ENCODE measurements at regions of chr20 and their contacts with region 1.

Region 1: GRCh38 chr20:62900052-62900691 is 26.1 kb downstream of the DIDO1 start:
- DNase-seq: no peak
- ATAC-seq: peak; percentile 97
- H3K4me3 ChIP-seq: no peak overlapping the region
- H3K27ac ChIP-seq: peak overlapping the region; percentile 30
- H3K4me1 ChIP-seq: peaks cover 25% of the 10 kb centered on the region
- H3K27me3 ChIP-seq: no peaks in the 10 kb centered on the region
- CTCF ChIP-seq: peak; percentile 94 to 98 (median 96)
- EP300 ChIP-seq: no peak
- POLR2A ChIP-seq: peak; percentile 74
- RAD21 ChIP-seq: peak; percentile 74

Region 2: DNA sequence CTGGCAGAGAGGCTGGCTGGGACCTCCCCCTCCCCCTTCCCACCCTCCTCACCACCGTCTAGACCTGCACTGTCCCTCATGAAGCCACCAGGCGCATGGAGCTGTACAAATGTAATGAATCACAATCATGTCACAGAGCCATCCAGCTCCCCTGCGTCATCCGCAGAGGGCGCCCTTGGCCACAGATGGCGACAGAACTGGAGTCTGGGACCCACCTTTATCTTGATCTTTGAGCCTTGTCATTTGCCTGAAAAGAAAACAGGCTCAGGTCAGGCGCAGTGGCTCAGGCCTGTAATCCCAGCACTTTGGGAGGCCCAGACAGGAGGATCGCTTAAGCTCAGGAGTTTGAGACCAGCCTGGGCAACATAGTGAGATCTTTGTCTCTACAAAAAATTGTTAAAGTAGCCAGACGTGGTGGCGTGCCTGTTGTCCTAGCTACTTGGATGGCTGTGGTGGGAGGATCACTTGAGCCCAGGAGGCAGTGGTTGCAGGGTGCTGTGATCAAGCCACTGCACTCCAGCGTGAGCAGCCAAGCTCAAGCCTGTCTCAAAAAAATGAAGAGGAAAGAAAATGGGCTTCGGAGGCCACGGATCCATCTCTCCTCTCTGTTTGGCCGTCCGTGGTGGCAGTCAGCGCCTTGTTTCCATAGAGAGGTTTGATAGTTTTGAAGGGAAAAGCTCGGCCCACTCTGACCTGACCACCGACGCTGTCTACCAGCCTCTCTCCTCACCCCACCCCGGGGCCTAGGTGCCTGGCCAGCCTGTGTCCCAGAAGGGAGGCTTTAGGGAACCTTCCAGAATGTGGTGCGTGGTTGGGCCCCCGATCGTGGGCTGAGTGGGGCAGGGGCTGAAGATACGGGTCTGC is 77.2 kb before region 1 on chr20:
- CTCF ChIA-PET with region 1: interaction called, 6 read pairs
- POLR2A ChIA-PET with region 1: no interaction called
- RAD21 ChIA-PET with region 1: interaction called, 4 read pairs
- SMC1A ChIA-PET with region 1: interaction called, 9 read pairs
- in situ Hi-C with region 1: no loop called
- intact Hi-C with region 1: loop called (anchors 2 kb)
- DNase-seq: no peak
- ATAC-seq: peak; percentile 88
- H3K4me3 ChIP-seq: no peak overlapping the region
- H3K27ac ChIP-seq: no peak overlapping the region
- H3K4me1 ChIP-seq: 0 out of 2 replicates have a peak, but pooled peaks cover 2% of the 10 kb centered on the region
- H3K27me3 ChIP-seq: peaks cover 0 to 2% of the 10 kb centered on the region in 2 experiments; a peak in 3 of 4 replicates
- CTCF ChIP-seq: peak; percentile 69 to 80 (median 74)
- EP300 ChIP-seq: no peak
- POLR2A ChIP-seq: no peak
- RAD21 ChIP-seq: peak; percentile 72

Region 3: DNA sequence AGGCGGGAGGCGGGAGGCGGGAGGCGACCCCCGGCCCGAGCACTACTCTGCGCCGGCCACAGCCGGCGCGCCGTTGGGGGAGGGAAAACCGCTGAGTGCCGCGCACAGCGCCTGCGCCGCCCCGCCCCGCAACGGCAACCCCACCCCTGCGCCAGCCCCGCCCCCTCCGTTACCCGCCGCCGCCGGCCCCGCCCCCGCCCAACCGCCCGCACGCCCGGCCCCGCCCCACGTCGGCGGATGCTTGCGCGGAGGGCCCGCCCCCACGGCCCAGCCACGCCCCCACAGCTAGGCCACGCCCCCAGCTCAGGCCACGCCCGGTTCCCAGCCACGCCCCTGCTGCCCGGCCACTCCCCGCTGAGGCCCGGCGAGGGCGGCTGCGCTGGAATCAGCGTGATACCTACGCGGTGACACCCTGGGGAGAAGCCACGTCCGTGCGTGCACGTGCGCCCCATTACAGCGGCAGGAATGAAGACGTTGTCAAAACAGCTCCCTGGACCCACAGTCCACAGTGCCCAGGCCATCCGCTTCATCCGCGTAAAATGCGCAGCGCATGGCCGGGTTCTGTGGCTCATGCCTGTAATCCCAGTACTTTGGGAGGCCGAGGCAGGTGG is 38.3 kb before region 1 on chr20 and contains the start of gene TCFL5:
- CTCF ChIA-PET with region 1: no interaction called
- POLR2A ChIA-PET with region 1: no interaction called
- RAD21 ChIA-PET with region 1: no interaction called
- SMC1A ChIA-PET with region 1: no interaction called
- in situ Hi-C with region 1: no loop called
- intact Hi-C with region 1: no loop called
- DNase-seq: no peak
- ATAC-seq: peak; percentile 96
- H3K4me3 ChIP-seq: peak within 1 kb of the TSS; percentile 75; the same call in 1 of the 2 replicates
- H3K27ac ChIP-seq: no peak within 1 kb of the TSS
- H3K4me1 ChIP-seq: peaks cover 5% of the 10 kb centered on the region
- H3K27me3 ChIP-seq: no peaks in the 10 kb centered on the region; a peak in 1 of 4 replicates
- CTCF ChIP-seq: no peak
- EP300 ChIP-seq: no peak
- POLR2A ChIP-seq: peak; percentile 38
- RAD21 ChIP-seq: no peak
- polyA plus RNA-seq, gene TCFL5: 1.4 to 1.6 TPM

Region 4: GRCh38 chr20:62921119-62921687 is 21.0 kb after region 1 on chr20:
- CTCF ChIA-PET with region 1: interaction called, 92 read pairs
- POLR2A ChIA-PET with region 1: interaction called, 4 read pairs
- RAD21 ChIA-PET with region 1: interaction called, 8 read pairs
- SMC1A ChIA-PET with region 1: interaction called, 21 read pairs
- in situ Hi-C with region 1: no loop called
- intact Hi-C with region 1: loop called (anchors 2 kb)
- DNase-seq: no peak
- ATAC-seq: peak; percentile 65
- H3K4me3 ChIP-seq: peak overlapping the region; percentile 18; the same call in 1 of the 2 replicates
- H3K27ac ChIP-seq: no peak overlapping the region
- H3K4me1 ChIP-seq: peaks cover 52% of the 10 kb centered on the region
- H3K27me3 ChIP-seq: no peaks in the 10 kb centered on the region
- CTCF ChIP-seq: peak; percentile 53 to 77 (median 54); a peak in 5 of 6 replicates
- EP300 ChIP-seq: no peak
- POLR2A ChIP-seq: no peak
- RAD21 ChIP-seq: 0 out of 2 replicates have a peak, but pooled peaks have one; percentile 26

Region 5: GRCh38 chr20:62926239-62927104 is 26.3 kb after region 1 on chr20 and contains the start of gene DIDO1:
- CTCF ChIA-PET with region 1: interaction called, 92 read pairs
- POLR2A ChIA-PET with region 1: interaction called, 4 read pairs
- RAD21 ChIA-PET with region 1: interaction called, 8 read pairs
- SMC1A ChIA-PET with region 1: interaction called, 4 read pairs
- in situ Hi-C with region 1: no loop called
- intact Hi-C with region 1: no loop called
- DNase-seq: peak; percentile 56
- ATAC-seq: peak; percentile 82
- H3K4me3 ChIP-seq: peak within 1 kb of the TSS; percentile 64
- H3K27ac ChIP-seq: peak within 1 kb of the TSS; percentile 96
- H3K4me1 ChIP-seq: peaks cover 19% of the 10 kb centered on the region
- H3K27me3 ChIP-seq: no peaks in the 10 kb centered on the region
- CTCF ChIP-seq: peak; percentile 34 to 59 (median 47); a peak in 5 of 6 replicates
- EP300 ChIP-seq: no peak
- POLR2A ChIP-seq: peak; percentile 80
- RAD21 ChIP-seq: no peak
- polyA plus RNA-seq, gene DIDO1: 5.5 to 7.8 TPM

Region 6: DNA sequence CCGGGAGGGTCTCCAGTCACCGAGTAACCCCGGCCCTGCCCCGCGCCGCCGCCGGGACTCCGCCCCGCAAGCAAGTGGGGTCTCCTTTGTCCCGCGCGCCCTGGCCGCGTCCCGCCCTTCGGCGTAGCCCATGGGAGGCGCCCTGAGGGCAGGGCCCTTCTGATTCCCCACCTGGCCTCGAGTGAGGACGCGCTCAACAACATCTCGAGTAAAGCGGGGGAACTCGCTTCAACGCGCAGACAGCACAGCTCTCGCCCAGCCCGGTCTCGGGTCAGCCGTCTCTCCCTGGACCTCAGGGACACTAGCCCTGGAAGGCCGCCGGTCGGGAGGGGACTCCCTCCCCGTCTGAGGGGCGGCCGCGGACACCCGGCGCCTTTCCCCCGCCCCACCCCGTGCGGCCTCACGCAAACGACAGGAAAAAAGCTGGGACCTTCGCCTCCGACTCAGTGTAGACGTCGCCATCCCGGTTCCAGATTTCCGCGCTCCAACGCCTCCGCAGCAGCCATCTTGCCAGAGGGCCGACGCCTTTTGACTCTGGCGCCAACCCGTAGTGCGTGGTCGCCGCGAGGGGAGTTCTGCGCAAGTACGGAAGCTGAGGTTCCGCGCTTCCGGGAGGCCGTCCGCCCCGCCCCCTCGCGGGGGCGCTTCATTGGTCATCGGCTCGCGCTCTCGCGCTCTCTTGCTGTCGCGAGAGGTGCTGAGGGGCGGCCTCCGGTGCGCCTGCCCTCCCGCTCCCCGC is 37.4 kb after region 1 on chr20:
- CTCF ChIA-PET with region 1: interaction called, 5 read pairs
- POLR2A ChIA-PET with region 1: interaction called, 4 read pairs
- RAD21 ChIA-PET with region 1: no interaction called
- SMC1A ChIA-PET with region 1: interaction called, 10 read pairs
- in situ Hi-C with region 1: no loop called
- intact Hi-C with region 1: no loop called
- DNase-seq: peak; percentile 82
- ATAC-seq: peak; percentile 91
- H3K4me3 ChIP-seq: peak overlapping the region; percentile 71
- H3K27ac ChIP-seq: peak overlapping the region; percentile 90
- H3K4me1 ChIP-seq: 0 out of 2 replicates have a peak, but pooled peaks cover 5% of the 10 kb centered on the region
- H3K27me3 ChIP-seq: no peaks in the 10 kb centered on the region
- CTCF ChIP-seq: no peak
- EP300 ChIP-seq: 0 out of 4 replicates have a peak, but pooled peaks of 1 of the 2 experiments have one; percentile 13
- POLR2A ChIP-seq: peak; percentile 90
- RAD21 ChIP-seq: no peak